ENCODE measurements at regions of chr20 and their contacts with region 1.

Region 1: GRCh38 chr20:63894358-63895201 is at the start of gene DNAJC5:
- DNase-seq: peak; percentile 78 to 99
- H3K4me3 ChIP-seq: peak within 1 kb of the TSS; percentile 57 to 85 (median 60)
- H3K27ac ChIP-seq: no peak within 1 kb of the TSS
- H3K4me1 ChIP-seq: peaks cover 0 to 6% (median 4%) of the 10 kb centered on the region in 4 experiments; a peak in 4 of 7 replicates
- H3K27me3 ChIP-seq: no peaks in the 10 kb centered on the region
- CTCF ChIP-seq: no peak
- EP300 ChIP-seq: no peak; a peak in 1 of 3 replicates
- POLR2A ChIP-seq: peak in 1 of 2 experiments; percentile 45; a peak in 1 of 3 replicates
- RAD21 ChIP-seq: no peak
- total RNA-seq, gene DNAJC5: 31.2 and 32.8 TPM in 2 replicates

Region 2: GRCh38 chr20:63911176-63911575 is 16.6 kb after region 1 on chr20:
- CTCF ChIA-PET with region 1: interaction called, 12 read pairs
- POLR2A ChIA-PET with region 1: interaction called, 3 read pairs
- DNase-seq: no peak
- H3K4me3 ChIP-seq: no peak overlapping the region
- H3K27ac ChIP-seq: no peak overlapping the region
- H3K4me1 ChIP-seq: no peaks in the 10 kb centered on the region; a peak in 2 of 7 replicates
- H3K27me3 ChIP-seq: no peaks in the 10 kb centered on the region
- CTCF ChIP-seq: no peak
- EP300 ChIP-seq: no peak
- POLR2A ChIP-seq: no peak
- RAD21 ChIP-seq: no peak